Activated CD4-positive, alpha-beta T cell treated with anti-CD3 and anti-CD28 coated beads, Interleukin-2, amount 10 ng/mL, durations not matched to agents 7 days and 5 days (primary cell): ENCODE measurements at regions of chr7 and their contacts with region 1.

Region 1: GRCh38 chr7:100101016-100101862 is at the starts of genes AP4M1 and MCM7:
- DNase-seq: peak; percentile 98
- H3K4me3 Mint-ChIP-seq: peak within 1 kb of the TSS; percentile 91
- H3K27ac Mint-ChIP-seq: peak within 1 kb of the TSS; percentile 93
- H3K4me1 Mint-ChIP-seq: peaks cover 45% of the 10 kb centered on the region
- H3K27me3 Mint-ChIP-seq: no peaks in the 10 kb centered on the region
- total RNA-seq, gene AP4M1: 13.1 to 14.1 TPM
- total RNA-seq, gene MCM7: 292 to 321 TPM

Region 2: DNA sequence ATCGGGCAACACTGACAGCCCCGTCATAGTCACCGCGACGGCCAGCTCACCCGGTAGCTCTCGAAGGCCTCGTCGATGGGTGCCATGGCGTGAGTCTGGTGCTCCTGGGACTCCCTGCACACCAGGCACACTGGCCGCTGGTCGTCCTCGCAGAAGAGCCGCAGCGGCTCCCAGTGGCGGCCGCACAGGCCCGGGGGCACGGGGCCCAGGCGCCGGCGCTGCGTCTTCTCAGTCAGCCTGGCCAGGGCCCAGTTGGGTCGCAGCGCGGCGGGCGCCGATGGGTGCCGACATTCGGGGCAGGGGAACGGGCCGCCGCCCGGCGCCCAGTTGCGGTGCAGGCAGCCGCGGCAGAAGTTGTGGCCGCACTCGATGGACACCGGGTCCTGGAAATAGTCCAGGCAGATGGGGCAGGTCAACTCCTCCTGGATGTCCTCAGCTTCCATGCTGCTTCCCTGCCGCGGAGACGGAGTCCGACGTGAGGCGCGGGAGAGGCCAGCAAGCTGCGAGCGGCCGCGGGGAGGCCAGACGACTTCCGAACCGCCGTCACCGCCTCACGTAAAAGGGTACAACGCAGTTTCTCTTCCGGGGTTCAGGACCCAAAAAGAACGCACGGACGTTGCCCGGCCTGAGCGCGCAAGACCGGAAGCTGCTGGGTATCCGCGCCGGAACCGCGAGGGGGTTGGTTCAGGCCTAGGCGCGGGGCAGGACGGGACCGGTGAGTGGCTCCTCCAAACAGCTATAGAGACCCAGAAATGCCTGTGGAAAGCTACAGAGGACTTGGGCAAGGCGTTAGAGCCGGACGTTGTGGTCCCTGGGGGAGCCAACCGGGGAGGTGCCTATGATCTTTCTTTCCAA is 182.1 kb before region 1 on chr7 and contains the start of gene TRIM4:
- CTCF ChIA-PET with region 1: no interaction called
- POLR2A ChIA-PET with region 1: no interaction called
- DNase-seq: peak; percentile 93
- H3K4me3 Mint-ChIP-seq: peak within 1 kb of the TSS; percentile 89
- H3K27ac Mint-ChIP-seq: peak within 1 kb of the TSS; percentile 95
- H3K4me1 Mint-ChIP-seq: peaks cover 49% of the 10 kb centered on the region
- H3K27me3 Mint-ChIP-seq: no peaks in the 10 kb centered on the region
- total RNA-seq, gene TRIM4: 33.3 to 33.5 TPM

Region 3: GRCh38 chr7:100040575-100040974 is 60.7 kb before region 1 on chr7:
- CTCF ChIA-PET with region 1: no interaction called
- POLR2A ChIA-PET with region 1: no interaction called
- DNase-seq: no peak
- H3K4me3 Mint-ChIP-seq: no peak overlapping the region
- H3K27ac Mint-ChIP-seq: no peak overlapping the region
- H3K4me1 Mint-ChIP-seq: peaks cover 20% of the 10 kb centered on the region
- H3K27me3 Mint-ChIP-seq: no peaks in the 10 kb centered on the region

Region 4: DNA sequence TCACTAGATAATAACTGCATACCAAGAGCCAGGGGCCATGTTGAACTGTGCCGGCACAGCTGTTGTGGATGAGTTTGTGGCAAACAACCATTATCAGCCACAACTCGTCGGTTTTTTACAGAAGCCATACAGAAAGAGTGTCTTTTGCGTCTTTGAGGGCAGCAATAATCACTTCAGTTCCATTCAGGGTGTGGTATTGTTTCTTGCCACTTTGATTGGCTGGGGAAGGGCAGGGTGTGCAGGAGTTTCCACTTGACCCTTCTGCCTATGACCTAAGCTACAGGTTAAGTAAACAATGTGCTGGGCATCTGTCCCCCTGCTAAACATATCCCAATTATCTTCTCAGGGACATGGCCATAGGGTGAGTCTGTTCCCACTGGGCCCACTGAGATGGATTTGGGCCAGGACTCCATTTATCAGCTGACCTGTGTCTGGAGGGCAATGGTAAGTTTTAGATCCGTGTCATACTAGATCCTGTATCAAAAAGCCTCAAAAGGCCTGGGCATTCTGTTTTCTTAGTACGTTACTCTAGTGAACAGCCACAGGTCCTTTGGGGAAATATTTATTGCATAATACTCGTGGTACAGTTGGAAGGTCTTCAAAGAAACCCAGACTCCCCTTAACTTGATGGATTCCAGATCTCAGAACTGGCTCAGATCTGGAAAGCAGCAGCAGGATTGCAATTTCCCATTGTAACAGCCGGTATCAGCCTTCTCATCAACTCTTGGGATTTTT is 35.6 kb before region 1 on chr7:
- CTCF ChIA-PET with region 1: no interaction called
- POLR2A ChIA-PET with region 1: no interaction called
- DNase-seq: no peak
- H3K4me3 Mint-ChIP-seq: no peak overlapping the region
- H3K27ac Mint-ChIP-seq: no peak overlapping the region
- H3K4me1 Mint-ChIP-seq: no peaks in the 10 kb centered on the region
- H3K27me3 Mint-ChIP-seq: no peaks in the 10 kb centered on the region

Region 5: DNA sequence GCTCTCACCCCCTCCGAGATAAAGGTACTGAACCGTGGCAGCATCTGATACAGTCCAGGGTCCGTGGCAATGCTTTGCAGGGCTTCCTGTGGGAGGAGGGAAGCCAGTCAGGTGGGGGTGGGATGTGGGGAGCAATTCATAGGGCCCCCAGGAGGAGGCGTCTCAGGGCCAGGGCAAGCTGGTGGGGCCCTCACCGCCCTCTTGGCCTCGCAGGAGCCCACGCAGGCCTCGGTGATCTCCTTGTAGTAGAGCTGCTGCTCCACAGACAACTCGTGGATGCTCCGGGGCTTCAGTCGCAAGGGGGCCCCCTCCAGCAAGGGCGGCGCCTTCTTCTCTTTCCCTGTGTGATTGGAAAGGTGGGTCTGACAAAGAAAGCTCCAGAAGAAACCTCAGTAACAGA is 10.7 kb after region 1 on chr7:
- CTCF ChIA-PET with region 1: interaction called, 26 read pairs
- POLR2A ChIA-PET with region 1: no interaction called
- DNase-seq: no peak
- H3K4me3 Mint-ChIP-seq: no peak overlapping the region
- H3K27ac Mint-ChIP-seq: no peak overlapping the region
- H3K4me1 Mint-ChIP-seq: peaks cover 1% of the 10 kb centered on the region
- H3K27me3 Mint-ChIP-seq: no peaks in the 10 kb centered on the region